ENCODE measurements at regions of chr3 and their contacts with region 1.

Region 1: DNA sequence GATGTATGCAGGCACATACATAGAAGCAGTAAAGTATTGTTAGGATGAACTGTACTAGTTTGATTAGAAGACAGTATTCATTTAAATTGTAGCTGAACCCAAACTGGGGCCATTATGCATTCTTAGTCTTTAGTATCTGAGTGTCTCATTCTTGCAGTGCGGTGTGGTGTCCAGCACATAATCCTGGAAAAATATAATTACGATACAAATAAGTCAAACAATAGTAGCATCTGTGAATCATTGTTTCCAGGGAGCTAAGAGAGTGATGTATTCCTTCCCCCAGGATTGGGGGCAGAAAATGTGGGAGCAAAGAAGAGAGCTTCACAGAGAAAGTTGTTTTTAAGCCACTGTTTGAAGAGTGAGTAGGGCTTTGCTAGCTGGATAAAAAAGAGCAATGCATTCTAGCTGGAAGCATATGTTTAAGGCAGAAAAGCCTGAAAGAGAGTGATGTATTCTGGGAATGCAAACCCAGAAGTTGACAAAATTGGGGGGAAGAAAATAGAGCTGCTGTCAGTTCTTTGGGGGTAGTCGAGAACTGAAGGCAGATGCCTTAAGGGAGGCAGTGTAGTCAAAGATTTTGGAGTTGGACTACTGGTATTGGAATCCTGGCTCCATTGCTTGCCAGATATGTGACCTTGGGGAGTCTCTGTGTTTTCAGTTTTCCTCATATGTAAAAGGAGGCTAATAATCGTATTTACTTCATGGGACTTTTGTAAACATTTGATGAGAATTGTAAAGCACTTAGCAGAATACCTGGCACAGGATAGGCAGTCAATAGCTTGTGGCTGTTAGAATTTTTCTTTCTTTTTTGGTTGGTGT is 14.1 kb downstream of the SLMAP start:
- DNase-seq: peak in 1 of 7 donors; percentile 46
- H3K4me3 ChIP-seq: no peak overlapping the region
- H3K27ac ChIP-seq: peak overlapping the region in 4 of 5 donors; percentile 16 to 63 (median 22)
- H3K4me1 ChIP-seq: peaks cover 5 to 40% of the 10 kb centered on the region in 2 donors
- H3K27me3 ChIP-seq: no peaks in the 10 kb centered on the region
- CTCF ChIP-seq: no peak
- POLR2A ChIP-seq: no peak

Region 2: DNA sequence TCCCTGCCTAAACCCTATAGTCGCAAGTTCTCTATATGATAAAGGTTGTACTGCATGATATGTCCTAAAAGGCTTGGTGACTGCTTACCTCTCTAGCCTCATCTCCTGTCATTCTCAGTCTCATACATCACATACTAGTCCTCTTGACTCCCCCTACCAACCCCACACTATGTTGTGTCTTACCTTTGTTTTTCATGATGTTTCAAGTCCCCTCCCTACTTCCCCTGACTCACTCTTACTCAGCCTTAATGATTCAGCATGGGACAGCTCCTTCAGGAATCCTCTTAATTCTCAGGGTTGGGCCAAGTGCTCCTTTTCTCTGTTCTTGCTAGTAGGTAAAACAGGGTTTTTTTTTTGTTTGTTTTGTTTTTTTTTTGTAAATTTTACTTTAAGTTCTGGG is 35.5 kb after region 1 on chr3:
- intact Hi-C with region 1: loop called in 1 of 2 experiments (anchors 5 kb)
- DNase-seq: peak in 3 of 7 donors; percentile 37 to 43 (median 39)
- H3K4me3 ChIP-seq: no peak overlapping the region
- H3K27ac ChIP-seq: peak overlapping the region in 3 of 5 donors; percentile 21 to 44 (median 41)
- H3K4me1 ChIP-seq: peaks cover 22 to 55% of the 10 kb centered on the region in 2 donors
- H3K27me3 ChIP-seq: no peaks in the 10 kb centered on the region
- CTCF ChIP-seq: no peak
- POLR2A ChIP-seq: no peak